ENCODE measurements at regions of chr4 and their contacts with region 1.

Region 1: GRCh38 chr4:38179690-38180377 is 219.6 kb downstream of the PTTG2 start:
- DNase-seq: peak; percentile 82
- H3K4me3 Mint-ChIP-seq: no peak overlapping the region
- H3K27ac Mint-ChIP-seq: peak overlapping the region; percentile 25
- H3K4me1 Mint-ChIP-seq: peaks cover 33% of the 10 kb centered on the region
- H3K27me3 Mint-ChIP-seq: no peaks in the 10 kb centered on the region
- CTCF ChIP-seq: peak; percentile 89

Region 2: GRCh38 chr4:38086151-38086848 is 93.5 kb before region 1 on chr4:
- CTCF ChIA-PET with region 1: interaction called, 12 read pairs
- POLR2A ChIA-PET with region 1: no interaction called
- intact Hi-C with region 1: no loop called
- DNase-seq: no peak
- H3K4me3 Mint-ChIP-seq: no peak overlapping the region
- H3K27ac Mint-ChIP-seq: no peak overlapping the region
- H3K4me1 Mint-ChIP-seq: peaks cover 5% of the 10 kb centered on the region
- H3K27me3 Mint-ChIP-seq: no peaks in the 10 kb centered on the region
- CTCF ChIP-seq: no peak

Region 3: DNA sequence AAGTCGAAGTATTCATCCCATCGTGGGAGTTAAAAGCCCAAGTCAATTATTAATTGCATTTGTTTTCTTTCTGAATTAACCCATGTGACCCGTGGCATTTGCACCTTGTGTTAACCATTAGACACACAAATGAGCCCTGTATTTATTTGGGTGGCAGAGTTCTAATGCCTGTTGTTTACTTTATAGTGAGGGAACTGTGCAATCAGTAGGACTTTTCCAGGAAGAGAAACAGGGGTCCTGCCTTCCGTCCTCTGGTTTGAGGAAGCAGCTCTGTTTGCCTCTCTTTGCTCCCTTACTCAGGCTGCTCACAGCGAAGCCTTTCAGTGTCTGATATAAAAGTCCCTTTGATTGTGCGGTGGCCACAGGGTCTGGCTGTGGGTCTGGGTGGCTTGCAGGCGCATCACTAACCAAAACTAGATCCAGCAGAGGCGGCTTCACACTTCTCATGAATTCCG is 44.0 kb after region 1 on chr4:
- CTCF ChIA-PET with region 1: interaction called, 4 read pairs
- POLR2A ChIA-PET with region 1: interaction called, 3 read pairs
- intact Hi-C with region 1: loop called (anchors 1 kb)
- DNase-seq: no peak
- H3K4me3 Mint-ChIP-seq: no peak overlapping the region
- H3K27ac Mint-ChIP-seq: no peak overlapping the region
- H3K4me1 Mint-ChIP-seq: no peaks in the 10 kb centered on the region
- H3K27me3 Mint-ChIP-seq: no peaks in the 10 kb centered on the region
- CTCF ChIP-seq: no peak

Region 4: DNA sequence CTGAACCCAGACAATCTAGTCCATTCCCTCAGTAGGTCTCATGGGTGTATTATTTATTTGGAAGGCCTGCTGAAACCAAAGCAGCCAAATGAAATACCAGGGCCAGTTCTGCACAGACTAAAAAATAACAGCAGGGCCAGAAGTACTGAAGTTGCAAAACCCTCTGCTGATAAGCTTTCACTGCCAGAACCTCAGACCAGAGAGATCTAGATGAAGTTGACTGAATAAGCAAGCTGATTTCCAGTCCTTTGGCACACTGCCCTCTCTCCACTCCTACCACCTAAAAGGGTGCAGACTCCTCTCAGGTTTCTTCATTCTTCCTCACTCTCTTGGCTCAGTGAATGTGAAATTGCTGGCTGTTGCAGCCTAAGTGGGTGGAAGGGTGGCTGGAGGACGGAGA is 207.5 kb after region 1 on chr4:
- CTCF ChIA-PET with region 1: interaction called, 10 read pairs
- POLR2A ChIA-PET with region 1: interaction called, 4 read pairs
- intact Hi-C with region 1: no loop called
- DNase-seq: peak; percentile 84
- H3K4me3 Mint-ChIP-seq: no peak overlapping the region
- H3K27ac Mint-ChIP-seq: no peak overlapping the region
- H3K4me1 Mint-ChIP-seq: peaks cover 28% of the 10 kb centered on the region
- H3K27me3 Mint-ChIP-seq: no peaks in the 10 kb centered on the region
- CTCF ChIP-seq: no peak

Region 5: DNA sequence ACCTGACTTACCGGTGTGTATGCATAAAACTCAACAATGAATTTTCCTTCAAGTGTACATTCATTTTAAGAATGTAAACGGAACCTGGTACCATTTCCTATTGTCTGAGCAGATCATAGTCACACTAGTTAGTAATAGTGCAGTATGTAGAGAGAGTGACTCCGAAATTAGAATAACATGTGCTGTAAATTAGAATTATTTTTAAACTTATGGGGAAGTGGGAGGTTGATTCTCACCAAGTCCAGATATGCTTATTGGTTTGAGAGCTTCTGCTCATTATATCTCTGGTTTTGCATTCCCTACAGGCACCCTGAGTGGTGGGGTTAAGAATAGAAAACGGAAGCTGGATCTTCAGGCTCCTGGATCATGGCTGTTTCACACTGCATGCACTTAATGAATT is 523.8 kb after region 1 on chr4:
- CTCF ChIA-PET with region 1: interaction called, 14 read pairs
- POLR2A ChIA-PET with region 1: no interaction called
- intact Hi-C with region 1: no loop called
- DNase-seq: no peak
- H3K4me3 Mint-ChIP-seq: no peak overlapping the region
- H3K27ac Mint-ChIP-seq: no peak overlapping the region
- H3K4me1 Mint-ChIP-seq: no peaks in the 10 kb centered on the region
- H3K27me3 Mint-ChIP-seq: no peaks in the 10 kb centered on the region
- CTCF ChIP-seq: no peak

Region 6: DNA sequence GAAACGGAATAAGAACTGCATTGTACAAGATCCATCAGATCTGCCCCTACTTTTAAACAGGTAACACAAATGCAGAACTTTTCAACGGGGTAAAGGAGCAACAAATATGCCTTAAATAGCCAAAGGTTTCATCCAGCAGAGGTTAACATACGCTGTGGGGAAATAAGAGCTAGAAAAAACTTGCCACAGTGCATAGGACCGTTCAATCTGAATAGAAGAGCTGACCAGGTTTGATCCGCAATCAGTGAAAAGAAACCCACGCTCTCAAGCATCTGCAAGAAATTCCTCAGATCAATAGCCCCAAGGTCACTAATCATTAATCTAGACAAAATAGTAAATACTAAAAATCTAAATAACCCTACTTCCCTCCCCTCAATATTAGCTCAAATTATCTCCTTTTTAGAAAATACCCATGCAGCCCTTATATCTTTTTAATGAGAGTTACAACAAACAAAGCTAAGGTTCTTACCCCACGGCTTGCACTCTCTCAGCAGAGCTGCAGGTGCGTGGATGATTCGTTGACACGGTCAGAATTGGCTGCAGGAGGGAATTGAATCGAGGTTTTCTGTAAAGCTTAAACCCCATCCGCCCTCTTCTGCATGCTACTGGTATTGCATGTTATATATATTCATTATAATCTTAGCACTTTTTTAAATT is 602.7 kb after region 1 on chr4 and contains the start of gene TLR10:
- CTCF ChIA-PET with region 1: interaction called, 4 read pairs
- POLR2A ChIA-PET with region 1: no interaction called
- intact Hi-C with region 1: loop called (anchors 1 kb)
- DNase-seq: peak; percentile 56
- H3K4me3 Mint-ChIP-seq: no peak within 1 kb of the TSS
- H3K27ac Mint-ChIP-seq: no peak within 1 kb of the TSS
- H3K4me1 Mint-ChIP-seq: no peaks in the 10 kb centered on the region
- H3K27me3 Mint-ChIP-seq: no peaks in the 10 kb centered on the region
- CTCF ChIP-seq: peak; percentile 54
- total RNA-seq, gene TLR10: not detected in 2 replicates